ENCODE measurements at regions of chr19 and their contacts with region 1.

Region 1: DNA sequence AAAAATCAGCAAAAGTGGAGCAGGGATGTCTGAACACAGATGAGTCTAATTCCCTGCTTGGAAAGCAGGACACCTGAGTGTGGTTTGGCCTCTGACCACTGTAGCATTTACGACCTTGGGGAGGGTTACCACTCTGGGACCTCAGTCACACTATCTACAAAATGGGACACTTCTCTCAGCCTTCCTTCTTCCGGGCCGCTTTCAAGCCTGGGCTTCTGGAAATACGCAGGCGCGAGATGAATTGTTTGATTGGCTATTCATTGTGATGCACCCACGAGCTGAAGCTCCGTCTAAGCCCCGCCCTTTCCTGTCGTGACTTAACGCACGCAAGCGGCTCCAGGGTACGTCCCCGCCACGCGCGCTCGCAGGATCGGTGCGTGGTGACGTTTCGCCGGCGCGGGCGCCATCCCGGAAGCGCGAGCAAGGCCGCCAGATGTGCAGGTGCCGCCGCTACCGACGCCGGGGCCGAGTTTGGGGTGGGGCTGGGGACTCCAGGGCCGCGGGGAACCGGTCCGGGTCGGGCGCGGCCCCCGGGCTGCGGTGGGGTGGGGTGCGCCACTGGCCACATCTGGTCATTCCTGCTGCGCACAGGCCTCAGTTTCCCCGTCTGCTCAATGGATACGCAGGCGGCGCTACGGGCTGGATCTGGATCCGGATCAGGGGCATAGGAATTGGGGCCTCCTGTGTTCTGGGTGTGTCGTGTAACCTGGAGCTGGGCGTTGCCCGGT is at the start of gene KXD1:
- DNase-seq: peak; percentile 99
- H3K4me3 Mint-ChIP-seq: peak within 1 kb of the TSS; percentile 86
- H3K27ac Mint-ChIP-seq: peak within 1 kb of the TSS; percentile 94
- H3K4me1 Mint-ChIP-seq: peaks cover 13% of the 10 kb centered on the region
- H3K27me3 Mint-ChIP-seq: no peaks in the 10 kb centered on the region
- total RNA-seq, gene KXD1: 112 to 114 TPM

Region 2: GRCh38 chr19:18401580-18402112 is 156.0 kb before region 1 on chr19:
- CTCF ChIA-PET with region 1: no interaction called
- POLR2A ChIA-PET with region 1: no interaction called
- intact Hi-C with region 1: no loop called
- DNase-seq: no peak
- H3K4me3 Mint-ChIP-seq: no peak overlapping the region
- H3K27ac Mint-ChIP-seq: no peak overlapping the region
- H3K4me1 Mint-ChIP-seq: no peaks in the 10 kb centered on the region
- H3K27me3 Mint-ChIP-seq: peaks cover 15% of the 10 kb centered on the region

Region 3: GRCh38 chr19:18503971-18504885 is 53.4 kb before region 1 on chr19:
- CTCF ChIA-PET with region 1: no interaction called
- POLR2A ChIA-PET with region 1: no interaction called
- intact Hi-C with region 1: no loop called
- DNase-seq: no peak
- H3K4me3 Mint-ChIP-seq: no peak overlapping the region
- H3K27ac Mint-ChIP-seq: peak overlapping the region; percentile 83
- H3K4me1 Mint-ChIP-seq: peaks cover 87% of the 10 kb centered on the region
- H3K27me3 Mint-ChIP-seq: no peaks in the 10 kb centered on the region

Region 4: DNA sequence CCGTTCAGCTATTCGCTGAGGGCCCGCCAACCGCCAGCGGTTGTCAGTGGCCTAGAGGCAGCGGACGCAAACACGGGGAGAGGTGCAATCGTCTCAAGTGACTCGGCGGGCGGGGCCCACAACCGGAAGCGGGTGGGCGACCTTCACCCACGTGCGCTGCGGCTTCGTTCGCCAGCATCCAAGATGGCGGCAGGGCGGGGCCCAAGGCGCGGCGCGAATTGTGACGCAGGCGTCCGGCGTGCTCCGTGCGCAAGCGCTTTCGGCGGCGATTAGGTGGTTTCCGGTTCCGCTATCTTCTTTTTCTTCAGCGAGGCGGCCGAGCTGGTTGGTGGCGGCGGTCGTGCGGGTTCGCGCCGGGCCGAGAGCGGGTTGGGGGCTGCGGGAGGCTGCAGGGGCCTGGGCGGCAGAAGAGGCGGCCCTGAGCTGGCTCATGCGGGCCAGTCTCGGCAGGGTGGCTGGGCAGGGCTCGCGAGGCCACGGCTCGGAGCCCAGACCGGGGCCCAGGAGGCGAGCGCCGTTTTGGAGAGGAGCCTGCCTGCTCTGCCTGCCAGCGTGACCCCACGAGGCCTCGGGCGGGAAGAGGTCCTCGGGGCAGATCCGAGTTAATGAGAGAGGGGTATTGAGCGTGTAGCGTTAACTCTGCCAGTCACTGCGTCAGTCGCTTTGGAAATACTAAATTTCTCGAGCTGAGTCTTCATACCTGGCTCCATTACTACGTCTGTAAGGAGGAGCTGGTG is 14.1 kb after region 1 on chr19 and contains the start of gene UBA52:
- CTCF ChIA-PET with region 1: interaction called, 4 read pairs
- POLR2A ChIA-PET with region 1: interaction called, 24 read pairs
- intact Hi-C with region 1: loop called (anchors 1 kb)
- DNase-seq: peak; percentile 99
- H3K4me3 Mint-ChIP-seq: peak within 1 kb of the TSS; percentile 91
- H3K27ac Mint-ChIP-seq: peak within 1 kb of the TSS; percentile 92
- H3K4me1 Mint-ChIP-seq: peaks cover 23% of the 10 kb centered on the region
- H3K27me3 Mint-ChIP-seq: no peaks in the 10 kb centered on the region
- total RNA-seq, gene UBA52: 1,569 to 1,601 TPM

Region 5: GRCh38 chr19:18785179-18786128 is 227.8 kb after region 1 on chr19:
- CTCF ChIA-PET with region 1: no interaction called
- POLR2A ChIA-PET with region 1: no interaction called
- intact Hi-C with region 1: no loop called
- DNase-seq: peak; percentile 83
- H3K4me3 Mint-ChIP-seq: no peak overlapping the region
- H3K27ac Mint-ChIP-seq: no peak overlapping the region
- H3K4me1 Mint-ChIP-seq: peaks cover 37% of the 10 kb centered on the region
- H3K27me3 Mint-ChIP-seq: peaks cover 46% of the 10 kb centered on the region